Uterus (tissue), 4 donors: ENCODE measurements at regions of chr10 and their contacts with region 1.

Region 1: GRCh38 chr10:84654671-84655070 is 326.3 kb downstream of the CCSER2 start:
- DNase-seq: no peak
- H3K4me3 ChIP-seq: no peak overlapping the region
- H3K27ac ChIP-seq: no peak overlapping the region
- H3K4me1 ChIP-seq: no peaks in the 10 kb centered on the region
- H3K27me3 ChIP-seq: no peaks in the 10 kb centered on the region
- CTCF ChIP-seq: no peak
- POLR2A ChIP-seq: no peak

Region 2: DNA sequence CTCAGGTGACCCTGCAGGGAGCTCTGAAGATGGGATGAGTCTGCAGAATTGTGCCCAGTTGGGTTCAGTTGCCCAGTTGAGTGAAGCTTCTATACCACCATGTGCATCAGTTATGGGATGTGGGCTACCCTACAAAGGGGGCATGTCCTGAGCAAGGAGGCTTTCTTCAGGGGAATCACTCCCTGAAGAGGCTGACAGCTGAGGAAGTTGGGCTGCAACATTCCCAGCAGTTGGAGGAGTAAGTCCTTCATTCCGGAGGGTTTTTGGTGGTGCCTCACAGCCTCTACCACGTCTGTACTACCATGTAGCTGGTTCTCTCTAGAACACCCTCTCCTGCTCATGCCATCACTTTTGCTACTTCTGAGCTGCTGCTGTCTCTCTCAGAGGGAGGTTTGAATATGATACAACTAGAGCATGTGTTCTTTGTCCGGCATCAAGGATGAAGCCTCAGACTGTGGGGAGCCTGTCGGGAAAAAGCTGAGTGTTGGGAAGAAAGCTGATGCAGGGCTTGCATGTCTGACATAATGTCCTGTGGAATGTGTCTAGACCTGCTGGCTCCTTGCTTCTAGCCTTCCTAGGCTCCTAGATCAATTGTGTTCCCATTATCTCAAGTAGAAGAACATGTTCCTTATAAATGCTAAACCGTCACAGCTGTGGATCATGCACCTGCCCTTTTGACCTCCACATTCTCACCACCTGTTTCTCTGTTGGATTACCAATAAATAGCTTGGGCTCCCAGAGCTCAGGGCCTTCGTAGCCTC is 29.5 kb after region 1 on chr10:
- intact Hi-C with region 1: loop called (anchors 1 kb)
- DNase-seq: no peak
- H3K4me3 ChIP-seq: no peak overlapping the region
- H3K27ac ChIP-seq: no peak overlapping the region
- H3K4me1 ChIP-seq: no peaks in the 10 kb centered on the region
- H3K27me3 ChIP-seq: no peaks in the 10 kb centered on the region
- CTCF ChIP-seq: no peak
- POLR2A ChIP-seq: no peak